ENCODE measurements at regions of chr18 and their contacts with region 1.

Region 1: DNA sequence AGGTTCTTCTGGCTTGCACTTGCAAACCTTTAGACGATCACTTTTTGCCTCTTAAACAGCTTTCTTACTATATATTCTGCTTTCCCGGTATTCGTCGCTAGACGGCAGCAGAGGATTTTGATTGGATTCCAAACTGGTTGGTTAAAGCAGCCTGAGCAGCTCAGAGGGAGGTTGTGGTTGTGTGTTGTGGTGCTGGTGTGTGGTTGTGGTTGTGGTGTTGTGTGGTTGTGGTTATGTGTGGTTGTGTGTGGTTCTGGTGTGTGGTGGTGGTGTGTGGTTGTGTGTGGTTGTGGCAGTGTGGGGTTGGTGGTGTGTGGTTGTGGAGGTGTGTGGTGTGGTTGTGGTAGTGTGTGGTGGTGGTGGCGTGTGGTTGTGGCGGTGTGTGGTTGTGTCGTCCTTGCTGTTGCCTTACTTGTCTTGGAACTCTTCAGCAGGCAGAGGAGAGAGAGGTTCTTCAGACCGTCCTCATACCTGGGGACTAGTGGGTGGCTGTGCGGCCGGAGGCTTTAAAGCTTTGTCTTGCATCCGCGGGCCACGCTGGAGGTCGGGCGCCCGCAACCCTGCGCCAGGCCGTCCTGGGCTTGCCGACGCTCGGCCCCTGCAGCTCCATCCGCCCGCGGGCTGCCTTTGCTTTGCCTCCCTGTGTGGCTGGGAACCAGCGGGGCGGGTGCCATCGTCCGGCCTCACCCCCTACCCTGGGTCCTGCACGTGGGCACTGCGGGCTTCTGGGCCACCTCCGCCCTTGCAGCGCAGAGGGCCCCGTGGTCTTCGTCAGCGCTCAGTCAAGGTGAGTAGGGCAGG is 190.8 kb downstream of the ARHGAP28 start:
- DNase-seq: peak; percentile 75 to 79
- H3K4me3 ChIP-seq: no peak overlapping the region
- H3K4me3 Mint-ChIP-seq: peak overlapping the region; percentile 45
- H3K27ac Mint-ChIP-seq: peak overlapping the region; percentile 85
- H3K4me1 ChIP-seq: peaks cover 43% of the 10 kb centered on the region
- H3K4me1 Mint-ChIP-seq: peaks cover 21% of the 10 kb centered on the region
- H3K27me3 ChIP-seq: no peaks in the 10 kb centered on the region
- H3K27me3 Mint-ChIP-seq: no peaks in the 10 kb centered on the region
- CTCF ChIP-seq: peak; percentile 67 to 77

Region 2: GRCh38 chr18:6859676-6860422 is 60.5 kb before region 1 on chr18:
- CTCF ChIA-PET with region 1: no interaction called
- POLR2A ChIA-PET with region 1: no interaction called
- intact Hi-C with region 1: no loop called
- DNase-seq: no peak
- H3K4me3 ChIP-seq: no peak overlapping the region
- H3K4me3 Mint-ChIP-seq: no peak overlapping the region
- H3K27ac Mint-ChIP-seq: no peak overlapping the region
- H3K4me1 ChIP-seq: no peaks in the 10 kb centered on the region
- H3K4me1 Mint-ChIP-seq: no peaks in the 10 kb centered on the region
- H3K27me3 ChIP-seq: no peaks in the 10 kb centered on the region
- H3K27me3 Mint-ChIP-seq: no peaks in the 10 kb centered on the region
- CTCF ChIP-seq: no peak

Region 3: DNA sequence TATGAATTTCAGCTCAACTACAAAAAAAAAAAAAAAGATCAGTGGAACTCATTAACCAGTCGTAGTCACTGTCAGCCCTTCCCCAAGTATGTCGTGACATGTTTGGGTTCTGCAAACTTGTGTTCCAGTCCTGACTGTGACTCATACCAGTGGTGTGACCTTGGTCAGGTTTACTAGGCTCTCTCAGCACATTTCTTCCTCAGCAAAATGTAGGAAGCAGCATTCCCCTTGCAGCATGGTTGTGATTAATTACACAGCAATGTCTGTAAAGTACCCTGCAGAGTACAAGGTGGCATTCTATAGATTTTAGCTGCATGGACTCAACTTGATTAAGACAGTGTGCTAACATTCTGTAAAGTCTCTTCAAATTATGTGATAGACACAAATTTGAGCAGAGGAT is 40.4 kb after region 1 on chr18:
- CTCF ChIA-PET with region 1: no interaction called
- POLR2A ChIA-PET with region 1: no interaction called
- intact Hi-C with region 1: no loop called
- DNase-seq: no peak
- H3K4me3 ChIP-seq: no peak overlapping the region
- H3K4me3 Mint-ChIP-seq: no peak overlapping the region
- H3K27ac Mint-ChIP-seq: no peak overlapping the region
- H3K4me1 ChIP-seq: peaks cover 12% of the 10 kb centered on the region; the same call in 1 of the 2 replicates
- H3K4me1 Mint-ChIP-seq: no peaks in the 10 kb centered on the region
- H3K27me3 ChIP-seq: no peaks in the 10 kb centered on the region
- H3K27me3 Mint-ChIP-seq: no peaks in the 10 kb centered on the region
- CTCF ChIP-seq: no peak

Region 4: DNA sequence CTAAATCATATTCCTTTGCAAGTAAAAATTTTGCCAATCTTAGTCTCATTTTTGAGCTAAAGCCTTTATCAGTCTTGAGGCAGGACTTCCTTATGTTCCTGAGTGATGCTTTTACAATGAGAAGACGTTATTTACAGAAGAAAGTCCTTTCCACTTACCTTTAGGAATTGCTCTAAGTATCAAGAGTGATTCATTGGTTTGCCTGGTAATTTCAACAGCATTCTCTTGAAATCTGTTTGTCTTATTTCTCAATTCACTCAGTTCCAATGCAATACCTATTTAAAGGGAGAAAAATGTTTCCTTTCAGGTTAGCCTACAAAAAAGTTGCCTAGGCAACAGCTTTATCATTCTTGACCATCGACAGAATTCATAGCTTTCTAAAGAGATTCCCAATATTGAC is 60.1 kb after region 1 on chr18:
- CTCF ChIA-PET with region 1: no interaction called
- POLR2A ChIA-PET with region 1: interaction called, 3 read pairs
- intact Hi-C with region 1: loop called (anchors 5 kb)
- DNase-seq: peak in 1 of 2 experiments; percentile 18
- H3K4me3 ChIP-seq: no peak overlapping the region
- H3K4me3 Mint-ChIP-seq: no peak overlapping the region
- H3K27ac Mint-ChIP-seq: no peak overlapping the region
- H3K4me1 ChIP-seq: peaks cover 6% of the 10 kb centered on the region; the same call in 1 of the 2 replicates
- H3K4me1 Mint-ChIP-seq: no peaks in the 10 kb centered on the region
- H3K27me3 ChIP-seq: no peaks in the 10 kb centered on the region
- H3K27me3 Mint-ChIP-seq: no peaks in the 10 kb centered on the region
- CTCF ChIP-seq: no peak

Region 5: GRCh38 chr18:7000484-7001096 is 80.3 kb after region 1 on chr18:
- CTCF ChIA-PET with region 1: interaction called, 7 read pairs
- POLR2A ChIA-PET with region 1: no interaction called
- intact Hi-C with region 1: loop called (anchors 1 kb)
- DNase-seq: no peak
- H3K4me3 ChIP-seq: no peak overlapping the region
- H3K4me3 Mint-ChIP-seq: no peak overlapping the region
- H3K27ac Mint-ChIP-seq: no peak overlapping the region
- H3K4me1 ChIP-seq: no peaks in the 10 kb centered on the region
- H3K4me1 Mint-ChIP-seq: no peaks in the 10 kb centered on the region
- H3K27me3 ChIP-seq: no peaks in the 10 kb centered on the region
- H3K27me3 Mint-ChIP-seq: no peaks in the 10 kb centered on the region
- CTCF ChIP-seq: peak; percentile 42 to 45

Region 6: DNA sequence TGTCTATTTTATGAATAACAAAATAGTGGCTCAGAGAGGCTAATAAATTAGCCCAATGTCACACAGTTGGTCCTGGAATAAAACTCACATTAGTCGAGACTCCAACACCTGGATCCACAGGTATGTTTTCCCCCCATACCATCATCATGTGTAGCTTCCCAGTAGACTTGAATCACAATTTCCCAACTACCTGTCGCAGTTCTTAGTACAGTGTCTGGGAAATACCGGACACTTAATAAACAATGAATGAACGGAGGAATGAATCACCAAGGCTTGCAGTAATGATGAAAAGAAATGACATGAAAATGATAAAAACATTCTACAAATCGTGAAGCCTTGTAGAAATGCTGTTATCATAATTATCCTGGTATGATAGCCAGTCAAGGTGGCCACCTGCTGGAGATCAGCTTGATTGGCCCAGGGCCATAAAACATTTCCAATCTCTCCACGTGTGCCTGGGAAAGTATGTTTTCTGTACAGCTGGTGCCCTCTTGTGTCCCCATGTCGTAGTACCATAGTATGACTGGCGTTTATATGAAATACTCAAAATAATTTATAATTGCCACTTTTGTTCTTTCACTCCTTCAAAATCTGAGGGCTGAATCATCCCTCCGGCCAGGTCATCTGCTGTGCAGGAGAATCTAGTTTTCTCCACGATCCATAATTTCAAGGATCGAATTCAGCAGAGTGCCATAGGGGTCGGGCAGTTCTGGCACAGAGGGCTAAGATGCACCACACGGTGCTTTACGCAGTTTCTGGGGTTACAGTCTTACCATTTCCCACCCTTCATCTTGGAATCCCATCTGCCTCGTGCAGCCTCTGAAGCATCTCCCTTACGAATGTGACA is 101.9 kb after region 1 on chr18:
- CTCF ChIA-PET with region 1: interaction called, 21 read pairs
- POLR2A ChIA-PET with region 1: no interaction called
- intact Hi-C with region 1: loop called (anchors 1 kb)
- DNase-seq: peak; percentile 73 to 78
- H3K4me3 ChIP-seq: no peak overlapping the region
- H3K4me3 Mint-ChIP-seq: no peak overlapping the region
- H3K27ac Mint-ChIP-seq: no peak overlapping the region
- H3K4me1 ChIP-seq: no peaks in the 10 kb centered on the region; the same call in 1 of the 2 replicates
- H3K4me1 Mint-ChIP-seq: no peaks in the 10 kb centered on the region
- H3K27me3 ChIP-seq: no peaks in the 10 kb centered on the region
- H3K27me3 Mint-ChIP-seq: no peaks in the 10 kb centered on the region
- CTCF ChIP-seq: peak; percentile 73 to 77

Region 7: DNA sequence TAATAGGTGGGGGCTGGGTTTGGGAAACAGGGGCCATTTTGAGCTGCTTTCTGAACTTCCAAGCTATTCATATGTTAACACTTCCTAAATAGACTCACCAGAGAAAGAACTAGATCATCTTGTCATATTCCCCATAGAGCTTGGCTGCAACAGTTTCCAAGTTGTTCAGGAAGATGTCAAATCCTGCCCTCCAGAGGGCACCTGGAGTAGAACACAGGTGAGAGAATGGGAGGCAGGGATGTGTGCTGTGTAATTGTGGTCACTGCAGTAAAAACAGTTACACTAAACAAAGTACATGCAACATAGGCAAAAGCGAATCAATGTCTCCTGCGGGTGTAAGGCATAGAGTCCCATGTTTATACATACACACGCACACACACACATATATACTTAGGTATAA is 276.1 kb after region 1 on chr18:
- CTCF ChIA-PET with region 1: interaction called, 3 read pairs
- POLR2A ChIA-PET with region 1: no interaction called
- intact Hi-C with region 1: loop called (anchors 5 kb)
- DNase-seq: peak in 1 of 2 experiments; percentile 41
- H3K4me3 ChIP-seq: no peak overlapping the region
- H3K4me3 Mint-ChIP-seq: no peak overlapping the region
- H3K27ac Mint-ChIP-seq: no peak overlapping the region
- H3K4me1 ChIP-seq: peaks cover 5% of the 10 kb centered on the region; the same call in 1 of the 2 replicates
- H3K4me1 Mint-ChIP-seq: no peaks in the 10 kb centered on the region
- H3K27me3 ChIP-seq: no peaks in the 10 kb centered on the region
- H3K27me3 Mint-ChIP-seq: no peaks in the 10 kb centered on the region
- CTCF ChIP-seq: peak; percentile 31 to 48